Gastrocnemius medialis (tissue), 4 donors: ENCODE measurements at regions of chr16 and their contacts with region 1.

Region 1: DNA sequence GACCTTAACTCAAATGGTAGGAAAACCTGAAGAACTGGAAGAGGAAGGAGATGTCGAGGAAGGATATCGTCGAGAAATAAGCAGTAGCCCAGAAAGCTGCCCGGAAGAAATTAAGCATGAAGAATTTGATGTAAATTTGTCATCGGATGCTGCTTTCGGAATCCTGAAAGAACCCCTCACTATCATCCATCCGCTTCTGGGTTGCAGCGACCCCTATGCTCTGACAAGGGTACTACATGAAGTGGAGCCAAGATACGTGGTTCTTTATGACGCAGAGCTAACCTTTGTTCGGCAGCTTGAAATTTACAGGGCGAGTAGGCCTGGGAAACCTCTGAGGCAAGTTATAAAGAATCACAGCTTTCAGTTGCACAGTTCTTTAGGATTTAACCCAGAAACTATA is 15.5 kb downstream of the ERCC4 start:
- DNase-seq: no peak
- ATAC-seq: no peak
- H3K4me3 ChIP-seq: no peak overlapping the region
- H3K27ac ChIP-seq: no peak overlapping the region
- H3K4me1 ChIP-seq: peaks cover 34 to 40% of the 10 kb centered on the region in 2 donors
- H3K27me3 ChIP-seq: no peaks in the 10 kb centered on the region
- CTCF ChIP-seq: peak in 3 of 5 experiments; percentile 7 to 42 (median 15)
- POLR2A ChIP-seq: no peak

Region 2: GRCh38 chr16:13873835-13874438 is 61.5 kb before region 1 on chr16:
- in situ Hi-C with region 1: no loop called
- intact Hi-C with region 1: no loop called
- DNase-seq: no peak
- ATAC-seq: no peak
- H3K4me3 ChIP-seq: no peak overlapping the region
- H3K27ac ChIP-seq: no peak overlapping the region
- H3K4me1 ChIP-seq: no peaks in the 10 kb centered on the region
- H3K27me3 ChIP-seq: no peaks in the 10 kb centered on the region
- CTCF ChIP-seq: peak in 2 of 5 experiments; percentile 12 to 14
- POLR2A ChIP-seq: no peak

Region 3: GRCh38 chr16:13994239-13995106 is 59.1 kb after region 1 on chr16:
- in situ Hi-C with region 1: no loop called
- intact Hi-C with region 1: loop called (anchors 5 kb)
- DNase-seq: peak; percentile 78 to 80
- ATAC-seq: peak; percentile 97 to 98
- H3K4me3 ChIP-seq: peak overlapping the region; percentile 11 to 48 (median 40)
- H3K27ac ChIP-seq: peak overlapping the region; percentile 83 to 90 (median 84)
- H3K4me1 ChIP-seq: peaks cover 35 to 38% of the 10 kb centered on the region in 2 donors
- H3K27me3 ChIP-seq: no peaks in the 10 kb centered on the region
- CTCF ChIP-seq: no peak
- POLR2A ChIP-seq: no peak

Region 4: DNA sequence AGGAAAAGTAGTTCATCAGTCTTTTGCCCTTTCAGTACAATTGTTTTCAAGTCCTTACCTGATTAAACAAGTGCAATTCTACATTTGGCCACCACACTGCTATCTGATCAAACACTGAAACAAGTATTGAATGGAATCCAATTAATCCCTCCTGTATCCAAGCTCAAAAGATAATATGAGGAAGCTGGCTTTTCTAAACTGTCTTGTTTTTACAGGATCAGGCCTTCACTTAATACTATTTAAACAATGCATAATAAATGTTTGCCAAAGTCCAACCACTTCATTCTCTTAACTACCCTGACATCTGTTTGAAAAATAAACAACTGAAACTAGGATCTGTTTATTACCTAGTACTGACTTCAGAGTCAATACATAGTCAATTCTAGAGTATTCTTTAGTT is 267.3 kb after region 1 on chr16:
- in situ Hi-C with region 1: loop called in 1 of 4 experiments (anchors 25 kb)
- intact Hi-C with region 1: no loop called
- DNase-seq: no peak
- ATAC-seq: peak in 1 of 2 donors; percentile 48
- H3K4me3 ChIP-seq: peak overlapping the region in 1 of 4 donors; percentile 8
- H3K27ac ChIP-seq: peak overlapping the region in 3 of 4 donors; percentile 49 to 57 (median 54)
- H3K4me1 ChIP-seq: peaks cover 7 to 23% of the 10 kb centered on the region in 2 donors
- H3K27me3 ChIP-seq: no peaks in the 10 kb centered on the region
- CTCF ChIP-seq: peak in 3 of 5 experiments; percentile 14 to 47 (median 36)
- POLR2A ChIP-seq: no peak